ENCODE measurements at regions of chr12 and their contacts with region 1.

Region 1: GRCh38 chr12:56987551-56988053 is 18.7 kb downstream of the ZBTB39 start:
- DNase-seq: peak; percentile 82
- H3K4me3 Mint-ChIP-seq: no peak overlapping the region
- H3K27ac Mint-ChIP-seq: no peak overlapping the region
- H3K4me1 Mint-ChIP-seq: peaks cover 9% of the 10 kb centered on the region
- H3K27me3 Mint-ChIP-seq: no peaks in the 10 kb centered on the region

Region 2: GRCh38 chr12:56763753-56764657 is 223.6 kb before region 1 on chr12:
- CTCF ChIA-PET with region 1: interaction called, 80 read pairs
- POLR2A ChIA-PET with region 1: no interaction called
- intact Hi-C with region 1: no loop called
- DNase-seq: no peak
- H3K4me3 Mint-ChIP-seq: no peak overlapping the region
- H3K27ac Mint-ChIP-seq: no peak overlapping the region
- H3K4me1 Mint-ChIP-seq: peaks cover under 1% of the 10 kb centered on the region
- H3K27me3 Mint-ChIP-seq: no peaks in the 10 kb centered on the region

Region 3: GRCh38 chr12:56839915-56840325 is 147.7 kb before region 1 on chr12:
- CTCF ChIA-PET with region 1: interaction called, 9 read pairs
- POLR2A ChIA-PET with region 1: no interaction called
- intact Hi-C with region 1: loop called (anchors 1 kb)
- DNase-seq: peak; percentile 57
- H3K4me3 Mint-ChIP-seq: no peak overlapping the region
- H3K27ac Mint-ChIP-seq: no peak overlapping the region
- H3K4me1 Mint-ChIP-seq: peaks cover 19% of the 10 kb centered on the region
- H3K27me3 Mint-ChIP-seq: no peaks in the 10 kb centered on the region

Region 4: GRCh38 chr12:56998981-56999380 is 11.4 kb after region 1 on chr12:
- CTCF ChIA-PET with region 1: interaction called, 62 read pairs
- POLR2A ChIA-PET with region 1: no interaction called
- intact Hi-C with region 1: no loop called
- DNase-seq: peak; percentile 78
- H3K4me3 Mint-ChIP-seq: no peak overlapping the region
- H3K27ac Mint-ChIP-seq: peak overlapping the region; percentile 34
- H3K4me1 Mint-ChIP-seq: peaks cover 54% of the 10 kb centered on the region
- H3K27me3 Mint-ChIP-seq: no peaks in the 10 kb centered on the region